ENCODE measurements at regions of chr9 and their contacts with region 1.

Region 1: GRCh38 chr9:35790385-35791296 is 750 bp upstream of the NPR2 start:
- DNase-seq: peak; percentile 92
- H3K4me3 ChIP-seq: peak overlapping the region; percentile 44 to 76 (median 70)
- H3K27ac ChIP-seq: peak overlapping the region; percentile 79 to 90 (median 85)
- H3K4me1 ChIP-seq: peaks cover 0 to 50% (median 43%) of the 10 kb centered on the region in 4 donors
- H3K27me3 ChIP-seq: no peaks in the 10 kb centered on the region
- CTCF ChIP-seq: peak; percentile 83 to 92 (median 86)
- EP300 ChIP-seq: no peak
- POLR2A ChIP-seq: no peak

Region 2: GRCh38 chr9:35814841-35815543 is 24.4 kb after region 1 on chr9 and contains the start of gene HINT2:
- intact Hi-C with region 1: loop called (anchors 1 kb)
- DNase-seq: peak; percentile 99
- H3K4me3 ChIP-seq: peak within 1 kb of the TSS; percentile 82 to 99 (median 98)
- H3K27ac ChIP-seq: peak within 1 kb of the TSS; percentile 98 to 100 (median 98)
- H3K4me1 ChIP-seq: peaks cover 0 to 36% (median 32%) of the 10 kb centered on the region in 4 donors
- H3K27me3 ChIP-seq: no peaks in the 10 kb centered on the region
- CTCF ChIP-seq: peak in 1 of 4 experiments; percentile 9
- EP300 ChIP-seq: no peak
- POLR2A ChIP-seq: peak; percentile 92 to 93
- total RNA-seq, gene HINT2: 23.5 to 42.8 (median 36.2) TPM

Region 3: DNA sequence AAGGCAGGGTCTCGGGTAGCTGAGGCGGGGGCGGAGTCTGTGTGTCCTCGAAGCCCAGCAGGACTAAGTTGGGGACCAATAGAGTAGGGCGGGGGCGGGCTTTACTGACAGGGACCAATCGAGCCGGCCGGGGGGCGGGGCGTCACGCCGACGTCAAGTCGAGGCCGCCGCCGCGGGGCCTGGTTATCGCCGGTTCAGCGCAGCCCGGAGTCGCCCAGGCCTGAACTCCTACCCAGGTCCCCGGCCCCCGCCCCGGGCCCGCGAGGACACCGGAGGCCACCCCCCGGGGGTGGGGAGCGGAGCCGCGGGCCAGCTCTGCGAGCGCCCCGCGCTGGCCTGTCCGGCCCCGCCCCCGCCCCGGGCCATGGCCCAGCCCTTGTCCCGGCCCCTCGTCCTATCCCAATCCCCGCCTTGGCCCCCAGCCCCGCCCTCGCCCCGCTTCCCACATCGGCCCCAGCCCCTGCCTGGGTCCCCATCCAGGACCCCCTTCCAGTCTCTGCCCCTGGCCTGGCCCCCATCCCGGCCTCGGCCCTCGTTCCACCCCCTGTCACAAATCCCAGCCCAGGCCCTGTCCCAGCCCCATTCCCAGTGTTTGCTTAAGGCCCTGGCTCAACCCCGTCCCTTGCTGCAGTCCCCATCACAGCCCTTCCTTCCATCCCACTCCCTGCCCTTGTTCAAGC is 38.6 kb after region 1 on chr9 and contains the start of gene TMEM8B:
- intact Hi-C with region 1: loop called (anchors 2 kb)
- DNase-seq: peak; percentile 99
- H3K4me3 ChIP-seq: peak within 1 kb of the TSS; percentile 52 to 95 (median 91)
- H3K27ac ChIP-seq: peak within 1 kb of the TSS; percentile 93 to 99 (median 98)
- H3K4me1 ChIP-seq: peaks cover 0 to 44% (median 34%) of the 10 kb centered on the region in 4 donors
- H3K27me3 ChIP-seq: no peaks in the 10 kb centered on the region
- CTCF ChIP-seq: no peak
- EP300 ChIP-seq: no peak
- POLR2A ChIP-seq: peak in 1 of 2 donors; percentile 21
- total RNA-seq, gene TMEM8B: 6.4 to 12.5 (median 8.4) TPM

Region 4: DNA sequence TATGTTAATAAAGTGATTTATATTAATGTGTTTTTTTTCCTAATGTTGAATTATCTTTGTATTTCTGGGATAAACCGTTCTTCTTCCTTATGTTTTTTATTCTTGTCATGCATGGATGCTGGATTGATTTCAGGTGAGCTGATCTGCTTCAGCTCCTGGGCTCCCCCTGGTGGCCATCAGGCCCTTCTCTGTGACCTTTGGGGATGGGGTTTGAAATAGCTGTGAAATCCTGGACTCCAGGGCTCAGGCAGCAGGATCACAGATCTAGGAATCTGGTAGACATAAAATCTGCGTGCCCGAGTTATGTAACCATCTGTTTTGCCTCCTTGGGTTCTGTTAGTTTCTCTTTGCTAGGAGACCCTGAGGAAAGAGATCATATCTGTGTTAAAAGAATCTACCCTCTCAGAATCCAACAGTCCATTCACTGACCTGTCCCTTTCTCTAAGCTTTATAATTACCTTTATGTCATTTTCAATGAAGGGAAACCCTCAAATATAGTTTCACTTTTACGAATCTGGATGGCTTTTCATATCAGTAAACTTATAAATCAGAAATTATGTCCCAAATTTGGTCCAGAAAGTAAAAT is 91.7 kb after region 1 on chr9:
- intact Hi-C with region 1: loop called (anchors 1 kb)
- DNase-seq: peak; percentile 92
- H3K4me3 ChIP-seq: no peak overlapping the region
- H3K27ac ChIP-seq: no peak overlapping the region
- H3K4me1 ChIP-seq: no peaks in the 10 kb centered on the region
- H3K27me3 ChIP-seq: no peaks in the 10 kb centered on the region
- CTCF ChIP-seq: peak; percentile 89 to 96 (median 94)
- EP300 ChIP-seq: no peak
- POLR2A ChIP-seq: no peak

Region 5: DNA sequence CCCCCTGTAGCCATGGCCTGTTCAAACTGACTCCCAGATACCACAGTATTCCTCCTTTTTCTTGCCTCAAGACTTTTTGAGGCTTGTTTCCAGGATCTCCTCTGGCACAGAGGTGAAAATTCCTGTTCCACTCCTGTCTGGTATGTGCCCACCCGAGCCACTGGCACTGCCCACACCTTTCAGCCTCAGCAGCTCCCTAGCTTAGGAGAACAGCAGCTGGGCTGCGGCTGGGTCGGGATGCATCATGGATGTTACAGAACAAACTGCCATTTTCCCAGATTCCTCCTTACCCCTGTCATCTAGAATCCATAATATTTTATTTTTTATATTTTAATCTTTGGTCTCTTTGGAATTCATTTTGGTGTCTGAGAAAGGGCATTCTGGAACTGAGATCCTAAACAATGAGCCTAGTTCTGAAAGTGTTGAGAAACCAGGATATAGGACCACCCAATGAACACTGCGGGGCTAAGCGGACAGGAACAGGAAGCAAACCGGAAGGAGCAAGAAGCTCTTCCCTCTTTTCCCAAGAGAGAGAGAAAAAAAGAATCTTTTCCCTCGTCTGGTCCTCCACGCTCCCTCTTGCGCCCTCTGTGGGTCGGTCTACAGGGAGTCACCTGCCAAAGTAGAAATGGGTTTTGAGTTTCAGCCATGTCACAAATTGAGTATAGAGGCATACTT is 154.8 kb after region 1 on chr9:
- intact Hi-C with region 1: loop called (anchors 5 kb)
- DNase-seq: peak; percentile 91
- H3K4me3 ChIP-seq: peak overlapping the region in 2 of 4 donors; percentile 2 to 22
- H3K27ac ChIP-seq: peak overlapping the region in 3 of 4 donors; percentile 3 to 32 (median 20)
- H3K4me1 ChIP-seq: peaks cover 0 to 5% (median 4%) of the 10 kb centered on the region in 4 donors
- H3K27me3 ChIP-seq: no peaks in the 10 kb centered on the region
- CTCF ChIP-seq: peak; percentile 71 to 85 (median 80)
- EP300 ChIP-seq: no peak
- POLR2A ChIP-seq: no peak